Psoas muscle (tissue), 8 donors: ENCODE measurements at regions of chr12 and their contacts with region 1.

Region 1: DNA sequence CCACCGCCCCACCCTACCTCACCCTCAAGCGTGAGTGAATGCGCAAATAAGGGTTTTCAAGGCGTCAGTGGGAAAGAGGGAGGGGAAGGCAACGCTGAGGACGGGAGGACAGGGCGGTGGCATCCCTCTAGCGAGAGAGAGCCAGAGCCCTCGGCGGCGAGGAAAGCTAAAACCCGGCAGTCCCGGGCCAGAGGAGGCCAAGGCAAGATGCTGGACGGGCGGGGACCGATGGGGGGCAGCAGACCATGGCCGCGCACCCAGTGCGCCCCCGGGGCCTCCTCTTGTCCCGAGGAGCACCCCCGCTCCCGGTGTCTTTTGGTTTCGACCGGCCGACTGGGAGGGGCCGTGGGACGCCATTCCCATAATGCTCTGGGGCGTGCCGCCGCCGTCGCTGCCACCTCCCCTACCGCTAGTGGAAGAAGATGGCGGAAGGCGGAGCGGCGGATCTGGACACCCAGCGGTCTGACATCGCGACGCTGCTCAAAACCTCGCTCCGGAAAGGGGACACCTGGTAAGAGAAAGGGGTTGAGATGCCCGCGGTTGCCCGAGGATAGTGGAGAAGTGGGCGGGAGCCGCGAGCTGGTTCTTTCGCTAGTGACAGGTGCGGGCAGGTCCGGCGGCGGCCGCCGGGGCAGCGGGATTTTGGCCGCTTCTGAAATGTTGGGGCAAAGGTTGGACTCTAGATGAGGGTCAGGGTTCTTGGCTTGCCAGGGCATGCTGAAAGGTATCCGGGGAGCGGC is at the start of gene USP15:
- DNase-seq: peak; percentile 98 to 99
- ATAC-seq: peak; percentile 97 to 98 (median 98)
- H3K4me3 ChIP-seq: peak within 1 kb of the TSS; percentile 96
- H3K27ac ChIP-seq: peak within 1 kb of the TSS; percentile 94
- H3K4me1 ChIP-seq: peaks cover 39% of the 10 kb centered on the region
- H3K27me3 ChIP-seq: no peaks in the 10 kb centered on the region
- CTCF ChIP-seq: peak; percentile 79
- total RNA-seq, gene USP15: 41.4 to 65.6 (median 50.9) TPM

Region 2: DNA sequence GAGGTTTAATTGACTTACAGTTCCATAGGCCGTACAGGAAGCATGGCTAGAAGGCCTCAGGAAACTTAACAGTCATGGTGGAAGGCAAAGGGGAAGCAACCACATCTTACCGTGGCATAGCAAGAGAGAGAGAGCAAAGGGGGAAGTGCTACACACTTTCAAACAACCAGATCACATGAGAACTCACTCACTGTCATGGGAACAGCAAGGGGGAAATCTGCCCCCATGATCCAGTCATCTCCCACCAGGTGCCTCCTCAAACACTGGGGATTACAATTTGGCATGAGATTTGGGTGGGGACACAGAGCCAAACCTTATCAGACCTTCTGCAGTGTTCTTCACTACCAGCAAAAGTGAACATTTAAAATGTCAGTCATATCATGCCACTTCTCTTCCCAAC is 58.9 kb after region 1 on chr12:
- intact Hi-C with region 1: loop called (anchors 10 kb)
- DNase-seq: no peak
- ATAC-seq: no peak
- H3K4me3 ChIP-seq: no peak overlapping the region
- H3K27ac ChIP-seq: no peak overlapping the region
- H3K4me1 ChIP-seq: peaks cover 11% of the 10 kb centered on the region
- H3K27me3 ChIP-seq: no peaks in the 10 kb centered on the region
- CTCF ChIP-seq: no peak

Region 3: DNA sequence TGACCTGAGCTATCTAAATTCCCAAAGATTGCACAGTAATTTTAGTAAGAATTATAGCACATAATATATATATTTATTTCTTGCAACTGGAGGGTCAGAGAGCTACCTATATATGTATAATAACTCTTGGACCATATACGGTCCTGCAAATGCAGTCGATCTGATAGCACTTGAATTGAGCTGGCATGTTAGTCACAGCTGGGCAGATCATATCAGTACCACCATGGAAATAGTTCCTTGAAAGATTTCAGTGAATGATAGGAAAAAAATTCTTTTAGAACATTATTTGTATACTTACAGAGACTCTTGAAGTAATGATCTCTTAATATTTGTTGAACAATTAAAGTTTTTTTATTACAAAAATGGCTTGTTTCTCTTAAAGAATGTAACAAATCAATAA is 112.0 kb after region 1 on chr12:
- intact Hi-C with region 1: loop called (anchors 5 to 10 kb)
- DNase-seq: no peak
- ATAC-seq: peak in 2 of 4 donors; percentile 67 to 74
- H3K4me3 ChIP-seq: peak overlapping the region; percentile 16
- H3K27ac ChIP-seq: peak overlapping the region; percentile 65
- H3K4me1 ChIP-seq: peaks cover 24% of the 10 kb centered on the region
- H3K27me3 ChIP-seq: no peaks in the 10 kb centered on the region
- CTCF ChIP-seq: no peak

Region 4: GRCh38 chr12:62379026-62379722 is 119.0 kb after region 1 on chr12:
- intact Hi-C with region 1: loop called (anchors 5 to 10 kb)
- DNase-seq: no peak
- ATAC-seq: no peak
- H3K4me3 ChIP-seq: no peak overlapping the region
- H3K27ac ChIP-seq: no peak overlapping the region
- H3K4me1 ChIP-seq: no peaks in the 10 kb centered on the region
- H3K27me3 ChIP-seq: no peaks in the 10 kb centered on the region
- CTCF ChIP-seq: no peak

Region 5: GRCh38 chr12:62459976-62460375 is 199.8 kb after region 1 on chr12:
- intact Hi-C with region 1: loop called in 1 of 2 experiments (anchors 5 kb)
- DNase-seq: no peak
- ATAC-seq: no peak
- H3K4me3 ChIP-seq: no peak overlapping the region
- H3K27ac ChIP-seq: no peak overlapping the region
- H3K4me1 ChIP-seq: no peaks in the 10 kb centered on the region
- H3K27me3 ChIP-seq: no peaks in the 10 kb centered on the region
- CTCF ChIP-seq: no peak

Region 6: DNA sequence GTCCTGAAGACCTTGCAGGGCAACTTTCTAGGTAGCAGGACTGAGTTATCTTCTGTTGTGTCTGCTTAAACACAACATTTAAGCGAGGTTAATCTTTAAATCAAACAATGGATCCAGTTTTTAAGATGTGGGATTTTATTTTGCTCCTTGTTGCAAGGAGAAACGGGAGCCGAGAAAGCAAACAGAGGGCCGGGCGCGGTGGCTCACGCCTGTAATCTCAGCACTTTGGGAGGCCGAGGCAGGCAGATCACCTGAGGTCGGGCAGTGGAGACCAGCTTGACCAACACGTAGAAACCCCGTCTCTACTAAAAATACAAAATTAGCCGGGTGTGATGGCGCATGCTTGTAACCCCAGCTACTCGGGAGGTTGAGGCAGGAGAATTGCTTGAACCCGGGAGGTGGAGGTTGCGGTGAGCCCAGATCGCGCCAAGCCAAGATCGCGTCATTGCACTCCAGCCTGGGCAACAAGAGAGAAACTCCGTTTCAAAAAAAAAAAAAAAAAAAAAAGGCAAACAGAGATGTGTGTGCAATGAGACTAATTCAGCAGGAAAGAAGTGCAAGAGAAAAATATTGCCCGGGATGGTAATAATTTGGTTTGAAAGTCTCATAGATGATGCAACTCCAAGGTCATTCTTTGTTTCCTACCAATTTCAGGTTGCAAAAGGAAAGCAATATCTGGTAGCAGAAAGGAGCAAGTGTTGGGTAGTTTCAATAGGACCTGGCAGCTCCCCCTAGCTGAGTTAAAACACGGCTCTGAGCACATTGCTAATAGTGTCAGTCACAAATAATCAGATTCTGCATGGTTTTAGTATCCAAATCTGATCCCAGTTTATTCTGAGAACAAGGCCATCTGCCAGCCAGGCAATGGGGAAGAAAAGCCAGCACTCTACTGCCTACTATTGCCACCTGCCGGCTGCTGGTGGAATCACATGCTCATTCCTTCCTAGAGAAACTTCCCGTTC is 533.4 kb after region 1 on chr12:
- intact Hi-C with region 1: loop called in 1 of 2 experiments (anchors 5 kb)
- DNase-seq: peak; percentile 83 to 89
- ATAC-seq: peak; percentile 84 to 94 (median 88)
- H3K4me3 ChIP-seq: peak overlapping the region; percentile 42
- H3K27ac ChIP-seq: no peak overlapping the region
- H3K4me1 ChIP-seq: peaks cover 11% of the 10 kb centered on the region
- H3K27me3 ChIP-seq: no peaks in the 10 kb centered on the region
- CTCF ChIP-seq: peak; percentile 99